ENCODE measurements at regions of chr15 and their contacts with region 1.

Region 1: DNA sequence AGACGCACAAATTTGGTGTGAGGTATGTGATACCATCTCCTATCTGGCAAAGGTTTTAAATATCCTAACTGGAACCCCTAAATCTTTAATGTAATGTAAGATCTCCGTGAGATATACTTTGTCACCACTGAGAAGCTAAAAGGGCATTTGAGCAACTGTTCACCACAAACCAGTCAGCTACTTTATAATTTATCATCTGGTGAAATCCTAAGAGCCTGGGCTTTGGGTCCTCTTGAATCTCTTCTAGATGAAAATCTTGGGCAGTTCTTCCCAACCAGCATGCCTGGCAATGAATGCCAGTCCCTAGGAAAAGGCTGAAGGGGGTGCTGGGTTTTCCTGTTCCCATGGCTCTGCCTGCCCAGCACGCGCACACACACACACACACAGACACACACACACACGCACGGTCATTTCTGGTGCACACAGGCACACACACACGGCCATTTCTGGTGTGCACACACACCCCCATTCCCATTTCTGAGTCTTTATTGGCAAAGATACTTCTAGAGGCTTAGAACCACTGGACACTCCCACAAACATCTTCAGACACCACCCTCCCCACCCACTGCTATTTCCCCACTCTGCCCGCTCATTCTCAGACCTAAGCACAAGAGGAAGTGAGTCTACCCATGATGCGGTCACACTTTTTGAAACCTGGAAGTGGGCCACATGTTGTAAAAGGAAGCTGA is 72.6 kb downstream of the MYO1E start:
- DNase-seq: peak; percentile 96
- ATAC-seq: peak; percentile 82
- H3K4me3 ChIP-seq: peak overlapping the region; percentile 41; the same call in 1 of the 2 replicates
- H3K27ac ChIP-seq: peak overlapping the region; percentile 89
- H3K4me1 ChIP-seq: peaks cover 75% of the 10 kb centered on the region
- H3K27me3 ChIP-seq: no peaks in the 10 kb centered on the region
- CTCF ChIP-seq: no peak

Region 2: DNA sequence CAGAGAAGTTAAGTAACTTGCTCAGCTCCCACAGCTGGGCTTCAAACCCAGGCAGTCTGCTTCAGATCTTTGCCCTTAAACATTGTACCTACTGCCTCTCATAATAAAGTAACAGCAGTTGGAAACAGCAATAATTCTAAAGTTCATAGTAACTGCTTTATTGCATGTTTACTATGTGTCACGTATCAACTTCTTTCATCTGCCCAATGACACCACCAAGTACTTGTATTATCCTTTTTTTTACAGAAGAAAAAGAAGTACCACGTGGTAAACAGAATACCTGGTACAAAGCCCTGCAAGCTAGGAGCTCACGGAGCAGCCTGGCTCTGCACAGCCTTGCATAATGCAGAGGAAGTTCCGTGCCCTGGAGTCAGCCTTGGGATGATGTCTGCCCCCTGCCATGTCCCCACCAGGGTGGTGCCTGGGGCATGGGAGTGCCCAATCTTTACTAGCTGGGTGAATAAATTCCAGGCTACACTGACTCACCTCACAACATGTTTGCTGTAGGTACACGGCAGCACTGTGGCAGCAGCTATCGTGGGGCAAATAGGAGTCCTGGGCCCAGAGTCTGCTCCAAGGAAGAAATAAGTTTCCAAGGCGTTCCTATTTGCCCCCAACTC is 16.2 kb before region 1 on chr15:
- CTCF ChIA-PET with region 1: no interaction called
- POLR2A ChIA-PET with region 1: interaction called, 12 read pairs
- intact Hi-C with region 1: no loop called
- DNase-seq: peak; percentile 98
- ATAC-seq: peak; percentile 97
- H3K4me3 ChIP-seq: peak overlapping the region; percentile 43; the same call in 1 of the 2 replicates
- H3K27ac ChIP-seq: peak overlapping the region; percentile 97
- H3K4me1 ChIP-seq: peaks cover 54% of the 10 kb centered on the region
- H3K27me3 ChIP-seq: no peaks in the 10 kb centered on the region
- CTCF ChIP-seq: no peak

Region 3: DNA sequence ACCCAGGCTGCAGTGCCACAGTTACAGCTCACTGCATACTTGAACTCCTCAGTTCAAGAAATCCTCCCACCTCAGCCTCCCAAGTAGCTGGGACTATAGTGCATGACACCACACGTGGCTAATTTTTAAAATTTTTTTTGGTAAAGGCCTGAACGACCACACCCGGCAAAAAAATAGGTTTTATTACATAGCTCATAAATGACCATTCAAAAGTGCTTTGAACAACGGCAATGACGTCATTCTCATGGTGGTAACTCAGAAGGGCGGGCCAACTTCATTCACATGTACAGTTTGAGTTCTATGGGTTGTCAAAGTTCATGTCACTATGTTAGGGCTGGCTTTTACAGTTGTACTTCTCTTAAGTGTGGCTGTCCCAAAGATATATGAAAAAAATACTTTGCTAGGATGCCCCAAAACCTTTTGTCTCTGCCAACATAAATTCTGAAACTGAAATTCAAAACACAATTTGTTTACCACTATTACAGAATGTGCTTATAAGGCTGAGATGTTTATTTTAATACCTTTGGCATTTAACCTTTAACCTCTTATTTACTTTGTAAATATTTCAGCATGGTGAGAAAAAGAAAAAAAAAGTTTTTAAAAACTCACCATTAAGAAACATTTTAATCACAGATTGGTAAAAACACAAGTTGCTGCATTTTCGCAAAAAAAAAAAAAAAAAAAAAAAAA is 66.4 kb after region 1 on chr15:
- CTCF ChIA-PET with region 1: no interaction called
- POLR2A ChIA-PET with region 1: interaction called, 12 read pairs
- intact Hi-C with region 1: loop called (anchors 5 kb)
- DNase-seq: peak; percentile 56
- ATAC-seq: peak; percentile 12
- H3K4me3 ChIP-seq: no peak overlapping the region
- H3K27ac ChIP-seq: peak overlapping the region; percentile 55
- H3K4me1 ChIP-seq: peaks cover 47% of the 10 kb centered on the region
- H3K27me3 ChIP-seq: no peaks in the 10 kb centered on the region
- CTCF ChIP-seq: no peak

Region 4: DNA sequence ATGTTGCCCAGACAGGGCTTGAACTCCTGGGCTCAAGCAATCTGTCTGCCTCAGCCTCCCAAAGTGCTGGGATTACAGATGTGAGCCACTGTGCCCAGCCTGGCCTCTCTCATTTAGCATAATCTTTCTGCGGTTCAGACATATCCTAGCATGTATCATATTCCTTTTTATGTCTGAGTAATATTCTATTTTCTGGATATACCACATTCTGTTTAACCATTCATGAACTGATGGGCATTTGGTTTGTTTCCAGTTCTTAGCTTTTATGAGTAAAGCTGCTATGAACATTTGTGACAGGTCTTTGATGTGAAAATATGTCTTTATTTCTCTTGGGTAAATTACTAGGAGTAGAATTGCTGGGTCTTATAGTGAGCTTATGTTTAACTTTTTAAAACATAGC is 161.4 kb after region 1 on chr15:
- CTCF ChIA-PET with region 1: no interaction called
- POLR2A ChIA-PET with region 1: no interaction called
- intact Hi-C with region 1: no loop called
- DNase-seq: no peak
- ATAC-seq: no peak
- H3K4me3 ChIP-seq: no peak overlapping the region
- H3K27ac ChIP-seq: no peak overlapping the region
- H3K4me1 ChIP-seq: peaks cover 4% of the 10 kb centered on the region
- H3K27me3 ChIP-seq: no peaks in the 10 kb centered on the region
- CTCF ChIP-seq: no peak